ENCODE measurements at regions of chr11 and their contacts with region 1.

Region 1: DNA sequence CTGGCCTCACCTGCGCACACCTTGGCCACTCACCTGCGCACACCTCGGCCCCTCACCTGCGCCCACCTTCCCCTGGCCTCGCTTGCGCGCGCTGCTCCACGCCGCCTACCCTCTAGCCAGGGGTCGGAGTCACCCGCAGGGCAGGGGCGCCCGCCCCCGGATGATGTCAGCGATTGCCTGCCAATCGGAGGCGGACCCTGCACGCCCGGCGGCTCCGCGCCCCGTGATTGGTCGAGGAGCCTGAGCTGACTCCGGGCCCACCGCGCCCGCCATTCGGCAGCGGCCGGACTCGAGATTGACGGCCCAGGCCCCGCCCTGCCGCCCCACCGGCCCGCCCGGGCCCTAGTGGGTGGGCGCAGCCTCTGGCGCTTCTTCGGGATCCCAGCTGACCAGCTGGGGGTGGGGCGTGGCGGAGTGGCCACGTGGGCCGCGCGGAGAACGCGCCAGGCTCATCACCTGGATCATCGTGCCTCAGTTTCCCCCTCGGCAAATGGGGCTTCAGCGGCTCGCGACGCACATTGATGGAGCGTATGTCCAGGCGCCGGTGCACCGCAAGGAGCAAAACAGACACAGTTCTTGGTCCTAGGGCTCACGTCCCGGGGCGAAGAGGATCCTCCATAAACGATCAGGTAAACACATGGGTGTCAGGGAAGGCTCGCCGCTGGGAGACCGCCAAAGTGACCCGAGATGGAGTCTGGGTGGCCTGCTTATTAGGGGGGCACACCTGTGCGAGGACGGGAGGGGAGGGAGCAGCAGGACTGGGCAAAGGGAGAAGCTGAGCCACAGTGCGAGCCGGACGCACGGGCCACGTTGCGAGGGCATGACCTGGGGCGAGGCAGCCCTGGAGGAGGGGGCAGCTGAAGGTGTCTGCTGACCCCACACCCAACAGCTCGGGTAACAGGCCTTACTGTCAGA is at the start of gene DHCR7:
- DNase-seq: peak; percentile 98
- ATAC-seq: peak; percentile 78
- H3K4me3 Mint-ChIP-seq: peak within 1 kb of the TSS; percentile 90
- H3K27ac Mint-ChIP-seq: peak within 1 kb of the TSS; percentile 91
- H3K4me1 Mint-ChIP-seq: peaks cover 48% of the 10 kb centered on the region
- H3K27me3 Mint-ChIP-seq: no peaks in the 10 kb centered on the region
- CTCF ChIP-seq: no peak
- total RNA-seq, gene DHCR7: 104 to 120 TPM (median 120 TPM) in 3 replicates

Region 2: GRCh38 chr11:71391796-71392195 is 56.7 kb before region 1 on chr11:
- CTCF ChIA-PET with region 1: no interaction called
- POLR2A ChIA-PET with region 1: no interaction called
- DNase-seq: no peak
- ATAC-seq: no peak
- H3K4me3 Mint-ChIP-seq: no peak overlapping the region
- H3K27ac Mint-ChIP-seq: no peak overlapping the region
- H3K4me1 Mint-ChIP-seq: no peaks in the 10 kb centered on the region
- H3K27me3 Mint-ChIP-seq: peaks cover 41% of the 10 kb centered on the region
- CTCF ChIP-seq: no peak

Region 3: GRCh38 chr11:71425855-71426254 is 22.7 kb before region 1 on chr11:
- CTCF ChIA-PET with region 1: interaction called, 10 read pairs
- POLR2A ChIA-PET with region 1: no interaction called
- DNase-seq: no peak
- ATAC-seq: no peak
- H3K4me3 Mint-ChIP-seq: no peak overlapping the region
- H3K27ac Mint-ChIP-seq: no peak overlapping the region
- H3K4me1 Mint-ChIP-seq: 0 out of 2 replicates have a peak, but pooled peaks cover 3% of the 10 kb centered on the region
- H3K27me3 Mint-ChIP-seq: no peaks in the 10 kb centered on the region; the same call in 1 of the 2 replicates
- CTCF ChIP-seq: no peak

Region 4: DNA sequence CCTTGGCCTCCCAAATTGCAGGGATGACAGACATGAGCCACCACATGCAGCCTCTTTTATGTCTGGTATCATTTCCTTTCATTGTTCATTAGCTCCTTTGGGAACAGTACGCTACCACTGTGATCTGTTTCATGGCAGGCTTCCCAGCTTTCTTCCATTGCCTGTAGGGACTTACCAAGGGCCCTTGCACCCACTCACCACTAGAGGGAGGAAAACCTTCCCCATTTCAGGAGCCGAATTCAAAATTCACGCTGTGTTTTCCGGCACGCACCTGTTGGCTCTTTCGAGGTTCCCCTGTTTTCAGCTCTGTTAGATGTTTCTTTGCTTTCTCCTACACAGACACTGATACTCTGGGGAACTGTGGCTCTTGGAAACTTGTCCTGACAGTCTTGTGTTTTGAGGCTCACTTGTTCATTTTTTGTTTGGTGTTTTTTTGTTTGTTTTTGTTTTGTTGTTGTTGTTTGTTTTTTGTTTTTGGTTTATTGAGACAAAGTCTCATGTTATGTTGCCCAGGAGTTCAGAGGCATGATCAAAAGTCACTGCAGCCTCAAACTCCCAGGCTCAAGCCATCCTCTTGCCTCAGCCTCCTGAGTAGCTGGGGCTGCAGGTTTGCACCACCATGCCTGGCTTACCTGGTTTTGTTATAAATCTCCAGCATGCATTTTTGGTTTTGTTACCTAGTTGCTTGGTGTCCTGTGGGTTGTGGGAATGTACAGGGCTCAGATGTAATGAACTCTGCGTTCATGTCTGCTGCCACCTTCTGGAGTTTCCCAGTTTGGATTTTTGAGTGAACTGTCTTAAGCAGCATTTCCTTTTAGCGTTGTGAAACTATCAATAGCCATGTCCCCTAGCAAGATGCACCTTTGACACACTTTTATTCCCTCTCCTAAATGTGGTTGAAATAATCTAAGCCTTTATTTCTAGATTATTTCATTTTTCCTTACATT is 131.8 kb after region 1 on chr11:
- CTCF ChIA-PET with region 1: interaction called, 10 read pairs
- POLR2A ChIA-PET with region 1: no interaction called
- DNase-seq: peak; percentile 63
- ATAC-seq: peak; percentile 72
- H3K4me3 Mint-ChIP-seq: no peak overlapping the region
- H3K27ac Mint-ChIP-seq: no peak overlapping the region
- H3K4me1 Mint-ChIP-seq: peaks cover 32% of the 10 kb centered on the region
- H3K27me3 Mint-ChIP-seq: peaks cover 23% of the 10 kb centered on the region
- CTCF ChIP-seq: peak; percentile 57

Measured in WTC11 (cell line).